A549 (cell line): ENCODE measurements at regions of chr2 and their contacts with region 1.

Region 1: DNA sequence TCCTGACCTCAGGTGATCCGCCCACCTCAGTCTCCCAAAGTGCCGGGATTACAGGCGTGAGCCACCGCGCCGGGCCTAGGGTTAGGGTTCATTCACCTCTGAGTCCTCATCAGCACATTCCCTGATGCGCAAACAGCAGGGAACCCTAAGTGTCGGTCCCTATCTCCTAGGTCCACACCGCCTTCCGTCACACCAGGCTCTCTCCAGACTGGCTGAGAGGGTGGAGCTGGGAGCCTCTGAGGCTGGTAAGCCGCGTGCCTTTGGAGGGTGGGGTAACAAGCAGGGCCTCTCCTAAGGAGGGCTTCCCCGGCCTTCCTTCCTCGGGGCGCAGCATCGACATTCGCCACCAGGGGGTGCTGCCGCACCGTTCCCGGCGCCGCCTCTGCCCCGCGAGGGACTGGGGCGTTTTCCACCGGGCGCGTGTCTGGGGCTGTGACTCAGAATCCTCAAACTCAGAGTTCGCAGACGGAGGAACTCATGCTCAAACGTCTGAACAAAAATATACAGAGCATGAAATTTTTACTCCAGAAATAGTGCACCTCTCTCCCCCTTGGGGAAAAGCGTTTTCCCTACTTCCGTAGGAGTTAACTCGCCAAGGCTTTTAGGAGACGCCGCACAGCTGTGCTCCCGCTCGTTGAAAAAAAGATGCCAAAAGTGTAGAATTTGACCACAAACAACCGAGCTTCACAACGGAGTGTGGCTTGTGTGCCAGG is 63.9 kb upstream of the ASAP2 start:
- DNase-seq: peak; percentile 93
- ATAC-seq: peak; percentile 88 to 94
- H3K4me3 ChIP-seq: peak overlapping the region; percentile 42
- H3K27ac ChIP-seq: peak overlapping the region; percentile 79 to 83
- H3K4me1 ChIP-seq: peaks cover 30% of the 10 kb centered on the region
- CTCF ChIP-seq: peak; percentile 99
- EP300 ChIP-seq: no peak
- POLR2A ChIP-seq: no peak
- RAD21 ChIP-seq: peak; percentile 100

Region 2: DNA sequence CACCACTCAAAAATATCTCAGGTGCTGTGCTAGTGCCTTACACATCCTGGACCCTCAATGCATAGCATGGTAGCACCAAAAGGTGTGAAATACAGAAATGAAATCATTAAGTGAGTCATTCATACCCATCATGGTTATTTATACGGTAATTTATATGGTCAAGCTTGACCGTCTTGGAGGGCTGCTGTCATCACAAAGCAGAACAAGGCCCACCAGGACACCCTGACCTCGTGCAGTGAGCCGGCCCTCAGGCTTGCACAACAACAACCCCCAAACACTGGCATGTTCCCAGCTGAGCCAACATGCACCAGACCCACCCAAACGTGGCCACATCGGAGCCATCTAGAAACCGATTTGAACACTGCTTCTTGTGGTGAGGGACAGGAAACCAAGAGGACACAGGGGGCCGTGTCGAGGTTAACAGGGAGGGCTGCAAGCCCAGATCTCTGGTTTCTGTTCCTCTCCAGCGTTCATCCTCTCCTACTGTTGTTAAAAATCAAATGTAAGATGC is 839.3 kb before region 1 on chr2:
- CTCF ChIA-PET with region 1: no interaction called
- POLR2A ChIA-PET with region 1: no interaction called
- DNase-seq: no peak
- ATAC-seq: no peak
- H3K4me3 ChIP-seq: no peak overlapping the region
- H3K27ac ChIP-seq: peak overlapping the region in 1 of 2 experiments; percentile 4; a peak in 2 of 6 replicates
- H3K4me1 ChIP-seq: peaks cover 44% of the 10 kb centered on the region
- CTCF ChIP-seq: no peak
- EP300 ChIP-seq: no peak
- POLR2A ChIP-seq: no peak
- RAD21 ChIP-seq: no peak

Region 3: DNA sequence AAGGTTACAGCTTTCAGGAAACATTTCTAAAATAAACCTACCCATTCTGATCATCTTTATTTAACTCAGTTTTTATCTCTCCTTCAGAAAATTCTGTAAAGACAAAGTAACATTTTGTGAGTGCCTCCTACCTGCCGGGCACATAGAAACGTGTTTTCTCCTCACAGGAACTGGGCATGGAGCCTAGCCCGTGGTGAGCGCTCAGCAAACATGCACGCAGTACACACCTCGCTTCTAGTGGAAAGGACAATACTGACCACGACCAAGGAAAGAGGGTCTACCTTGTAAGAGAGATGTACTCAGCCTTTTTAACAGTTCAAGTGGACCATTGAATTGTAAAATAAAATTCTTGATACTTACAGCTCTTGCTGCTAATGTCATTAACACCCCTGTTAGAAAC is 280.5 kb before region 1 on chr2:
- CTCF ChIA-PET with region 1: interaction called, 113 read pairs
- POLR2A ChIA-PET with region 1: no interaction called
- DNase-seq: no peak
- ATAC-seq: no peak
- H3K4me3 ChIP-seq: no peak overlapping the region
- H3K27ac ChIP-seq: no peak overlapping the region
- H3K4me1 ChIP-seq: no peaks in the 10 kb centered on the region
- CTCF ChIP-seq: no peak
- EP300 ChIP-seq: no peak
- POLR2A ChIP-seq: no peak
- RAD21 ChIP-seq: no peak

Region 4: DNA sequence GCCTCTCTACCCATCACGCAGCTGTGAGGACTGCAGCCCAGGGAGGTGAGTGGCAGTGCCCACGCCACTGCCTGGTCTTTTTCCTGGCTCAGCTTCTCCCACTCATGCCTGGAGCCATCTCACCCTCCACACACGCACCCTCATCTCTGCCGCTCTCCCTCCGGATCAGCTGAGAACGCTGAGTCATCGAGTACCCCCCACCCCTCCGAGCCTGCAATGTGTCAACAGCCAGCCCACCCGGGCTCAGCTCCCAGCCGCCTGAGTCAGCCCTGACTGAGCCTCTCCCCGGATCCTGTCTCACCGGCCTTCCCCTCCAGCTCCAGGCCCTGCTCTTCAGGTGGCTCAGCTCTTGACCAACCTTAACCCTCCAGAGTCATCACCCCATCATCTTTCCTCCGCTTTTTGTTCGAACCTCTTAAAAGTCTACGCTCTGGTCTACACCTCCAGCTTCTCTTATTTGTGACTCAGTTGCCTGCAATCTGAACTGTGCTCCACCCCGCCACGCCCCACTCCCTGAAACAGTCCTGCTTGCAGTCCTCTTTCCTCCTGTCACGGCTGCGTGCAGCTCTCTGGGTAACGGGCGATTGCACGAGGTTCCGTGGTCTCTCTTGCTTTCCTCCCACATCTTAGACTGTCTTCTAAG is 30.5 kb before region 1 on chr2:
- CTCF ChIA-PET with region 1: interaction called, 89 read pairs
- POLR2A ChIA-PET with region 1: no interaction called
- DNase-seq: peak; percentile 54 to 65
- ATAC-seq: peak; percentile 84 to 88
- H3K4me3 ChIP-seq: no peak overlapping the region
- H3K27ac ChIP-seq: peak overlapping the region; percentile 66 to 86
- H3K4me1 ChIP-seq: peaks cover 21% of the 10 kb centered on the region
- CTCF ChIP-seq: no peak
- EP300 ChIP-seq: peak in 1 of 2 experiments; percentile 38; a peak in 1 of 5 replicates
- POLR2A ChIP-seq: no peak
- RAD21 ChIP-seq: peak in 1 of 2 experiments; percentile 24; a peak in 1 of 5 replicates

Region 5: DNA sequence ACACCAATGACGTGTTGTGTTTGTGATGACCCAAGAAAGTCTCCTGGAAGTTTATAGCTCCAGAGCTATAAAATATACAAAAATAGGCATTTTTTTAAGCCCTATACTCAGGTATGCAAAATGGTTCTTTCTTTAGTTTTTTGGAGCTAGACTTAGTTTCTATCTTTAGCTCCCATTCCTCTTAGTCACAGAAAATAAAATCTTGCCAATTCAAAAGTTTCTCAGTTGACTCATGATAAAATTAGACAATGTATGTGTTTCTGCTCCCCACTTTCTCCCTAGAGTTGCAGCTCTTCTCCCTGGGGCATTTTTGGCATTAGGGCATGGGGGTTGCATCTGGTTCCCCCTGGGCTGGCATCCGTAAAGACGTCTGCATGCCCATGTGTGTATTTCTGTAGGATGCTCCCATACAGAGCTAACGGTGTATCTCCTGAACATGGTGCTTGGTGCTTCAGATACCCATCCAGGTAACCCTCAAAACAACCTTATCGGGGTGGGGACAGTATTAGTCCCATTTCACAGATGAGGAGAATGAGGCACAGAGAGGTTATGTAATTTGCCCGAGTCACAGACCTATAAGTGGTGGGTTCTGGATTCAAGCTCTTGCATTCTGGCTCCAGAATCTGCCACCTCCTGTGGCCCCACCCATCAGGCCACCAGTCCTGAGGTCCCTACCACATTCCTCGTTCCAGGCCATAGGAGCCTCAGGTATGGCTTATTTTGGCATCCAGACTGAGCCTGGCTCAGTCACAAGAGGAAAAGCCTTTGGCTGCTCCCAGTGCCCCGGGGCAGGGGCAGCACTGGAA is 20.8 kb after region 1 on chr2:
- CTCF ChIA-PET with region 1: interaction called, 82 read pairs
- POLR2A ChIA-PET with region 1: no interaction called
- DNase-seq: no peak
- ATAC-seq: no peak
- H3K4me3 ChIP-seq: no peak overlapping the region
- H3K27ac ChIP-seq: no peak overlapping the region
- H3K4me1 ChIP-seq: no peaks in the 10 kb centered on the region
- CTCF ChIP-seq: no peak
- EP300 ChIP-seq: no peak
- POLR2A ChIP-seq: no peak
- RAD21 ChIP-seq: no peak

Region 6: DNA sequence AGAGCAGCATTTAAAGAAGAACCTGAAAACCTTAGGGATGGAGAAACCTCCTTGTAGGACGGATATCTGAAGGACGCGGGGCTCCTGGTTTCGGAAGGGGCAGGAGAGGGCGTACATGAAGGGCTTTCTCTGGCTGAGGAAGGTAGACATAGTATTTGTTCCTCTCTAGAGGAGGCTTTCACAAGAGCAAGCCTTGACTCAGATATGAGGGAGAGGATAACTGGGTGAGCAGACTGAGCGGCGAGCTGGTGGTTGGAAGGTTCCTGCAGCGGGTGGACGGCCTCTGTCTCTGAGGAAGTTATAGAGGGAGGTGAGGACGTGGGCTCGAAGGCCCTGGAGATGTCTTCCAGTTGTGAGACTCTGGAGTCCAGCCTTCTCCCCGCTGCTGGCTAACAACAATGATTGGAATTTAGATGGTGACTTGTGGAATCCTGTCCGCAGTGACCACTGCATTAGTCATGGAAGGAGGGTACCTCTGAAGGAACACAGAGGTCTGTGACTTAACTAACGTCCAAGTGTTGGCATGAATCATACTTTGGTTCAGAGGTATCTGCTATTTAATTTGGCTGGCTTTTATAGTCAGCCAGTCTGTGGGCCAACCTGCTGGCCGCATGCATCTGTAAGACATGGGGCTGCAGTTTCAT is 144.8 kb after region 1 on chr2:
- CTCF ChIA-PET with region 1: interaction called, 19 read pairs
- POLR2A ChIA-PET with region 1: no interaction called
- DNase-seq: peak; percentile 94 to 99
- ATAC-seq: peak; percentile 94 to 95
- H3K4me3 ChIP-seq: no peak overlapping the region; the same call in 1 of the 3 replicates
- H3K27ac ChIP-seq: peak overlapping the region; percentile 86 to 87
- H3K4me1 ChIP-seq: peaks cover 58% of the 10 kb centered on the region
- CTCF ChIP-seq: peak; percentile 21; the same call in 1 of the 3 replicates
- EP300 ChIP-seq: peak; percentile 52 to 61; a peak in 2 of 5 replicates
- POLR2A ChIP-seq: no peak
- RAD21 ChIP-seq: peak in 1 of 2 experiments; percentile 41; a peak in 4 of 5 replicates

Region 7: DNA sequence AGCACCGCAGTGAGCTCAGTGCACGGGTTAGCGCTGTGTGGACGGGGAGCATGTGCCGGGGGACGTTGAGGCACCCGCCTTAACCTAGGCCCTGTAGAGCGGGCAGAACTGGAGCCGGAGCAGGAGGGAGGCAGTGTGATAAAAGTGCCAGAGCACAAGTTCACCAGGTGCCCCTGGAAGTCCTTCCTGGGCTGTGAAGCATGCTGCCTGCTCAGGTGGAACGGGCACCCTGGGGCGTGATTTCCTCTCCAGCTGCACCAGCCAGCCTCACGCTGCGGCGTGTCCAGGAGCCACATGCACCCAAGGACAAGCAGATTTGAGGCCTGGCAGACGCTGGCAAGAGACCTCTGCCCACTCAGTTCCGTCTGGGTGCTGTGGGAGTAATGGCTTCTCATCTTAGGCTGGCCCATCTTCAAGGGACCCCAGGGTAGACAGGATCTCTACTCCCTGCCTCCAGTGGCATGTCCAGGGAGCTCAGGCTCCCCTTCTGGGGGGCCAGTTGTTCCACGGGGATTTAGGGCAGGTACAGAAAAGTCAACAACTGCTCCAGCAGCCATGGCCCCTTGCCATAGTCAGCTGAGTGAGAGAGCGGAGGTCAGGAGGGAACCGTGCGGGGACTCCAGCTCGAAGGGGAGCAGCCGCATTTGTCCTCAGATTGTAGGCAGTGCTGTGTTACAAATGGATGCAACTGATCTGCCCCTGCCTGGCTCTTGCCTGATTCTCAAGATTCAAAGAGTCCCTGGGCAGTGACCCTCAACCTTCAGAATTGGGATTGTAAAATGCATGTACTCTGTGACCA is 230.6 kb after region 1 on chr2:
- CTCF ChIA-PET with region 1: interaction called, 67 read pairs
- POLR2A ChIA-PET with region 1: no interaction called
- DNase-seq: no peak
- ATAC-seq: no peak
- H3K4me3 ChIP-seq: no peak overlapping the region
- H3K27ac ChIP-seq: no peak overlapping the region
- H3K4me1 ChIP-seq: peaks cover 11% of the 10 kb centered on the region
- CTCF ChIP-seq: no peak
- EP300 ChIP-seq: no peak
- POLR2A ChIP-seq: no peak
- RAD21 ChIP-seq: no peak

Region 8: GRCh38 chr2:9423100-9423921 is 280.6 kb after region 1 on chr2 and contains the starts of genes CPSF3 and ITGB1BP1:
- CTCF ChIA-PET with region 1: interaction called, 28 read pairs
- POLR2A ChIA-PET with region 1: no interaction called
- DNase-seq: peak; percentile 99
- ATAC-seq: peak; percentile 91 to 95
- H3K4me3 ChIP-seq: peak within 1 kb of the TSS; percentile 81
- H3K27ac ChIP-seq: peak within 1 kb of the TSS; percentile 94 to 98
- H3K4me1 ChIP-seq: peaks cover 19% of the 10 kb centered on the region
- CTCF ChIP-seq: no peak; the same call in 2 of the 3 replicates
- EP300 ChIP-seq: no peak
- POLR2A ChIP-seq: peak; percentile 52
- RAD21 ChIP-seq: peak in 1 of 2 experiments; percentile 28; a peak in 3 of 5 replicates
- polyA plus RNA-seq, gene CPSF3: 76.7 and 77.2 TPM in 2 replicates
- polyA plus RNA-seq, gene ITGB1BP1: 136 and 144 TPM in 2 replicates